OCI-LY7 (cell line): ENCODE measurements at regions of chr16 and their contacts with region 1.

Region 1: GRCh38 chr16:51818342-51818944 is 667.4 kb upstream of the SALL1 start:
- DNase-seq: peak; percentile 1
- H3K4me3 ChIP-seq: no peak overlapping the region
- H3K27ac ChIP-seq: no peak overlapping the region
- H3K4me1 ChIP-seq: no peaks in the 10 kb centered on the region
- CTCF ChIP-seq: peak; percentile 75

Region 2: DNA sequence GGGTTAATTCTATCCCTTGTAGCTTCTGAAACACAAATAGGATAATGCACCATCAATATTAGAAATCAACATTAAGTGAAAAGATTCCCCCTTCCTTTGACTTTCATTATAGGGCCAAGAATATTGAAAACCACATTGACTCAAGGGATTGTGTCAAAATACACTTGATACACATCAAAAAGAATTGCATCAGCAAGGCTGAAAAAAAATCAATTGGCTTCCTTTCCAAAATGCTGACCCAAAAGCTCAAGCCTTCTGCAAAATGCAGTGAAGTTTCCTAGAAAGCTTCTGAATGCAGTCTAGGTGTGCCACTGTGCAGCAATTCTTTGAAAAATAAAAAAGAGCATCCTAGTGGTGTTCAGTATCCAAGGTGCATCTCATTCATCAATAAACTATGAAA is 54.1 kb after region 1 on chr16:
- CTCF ChIA-PET with region 1: no interaction called
- POLR2A ChIA-PET with region 1: no interaction called
- intact Hi-C with region 1: no loop called
- DNase-seq: no peak
- H3K4me3 ChIP-seq: no peak overlapping the region
- H3K27ac ChIP-seq: no peak overlapping the region
- H3K4me1 ChIP-seq: no peaks in the 10 kb centered on the region
- CTCF ChIP-seq: no peak

Region 3: DNA sequence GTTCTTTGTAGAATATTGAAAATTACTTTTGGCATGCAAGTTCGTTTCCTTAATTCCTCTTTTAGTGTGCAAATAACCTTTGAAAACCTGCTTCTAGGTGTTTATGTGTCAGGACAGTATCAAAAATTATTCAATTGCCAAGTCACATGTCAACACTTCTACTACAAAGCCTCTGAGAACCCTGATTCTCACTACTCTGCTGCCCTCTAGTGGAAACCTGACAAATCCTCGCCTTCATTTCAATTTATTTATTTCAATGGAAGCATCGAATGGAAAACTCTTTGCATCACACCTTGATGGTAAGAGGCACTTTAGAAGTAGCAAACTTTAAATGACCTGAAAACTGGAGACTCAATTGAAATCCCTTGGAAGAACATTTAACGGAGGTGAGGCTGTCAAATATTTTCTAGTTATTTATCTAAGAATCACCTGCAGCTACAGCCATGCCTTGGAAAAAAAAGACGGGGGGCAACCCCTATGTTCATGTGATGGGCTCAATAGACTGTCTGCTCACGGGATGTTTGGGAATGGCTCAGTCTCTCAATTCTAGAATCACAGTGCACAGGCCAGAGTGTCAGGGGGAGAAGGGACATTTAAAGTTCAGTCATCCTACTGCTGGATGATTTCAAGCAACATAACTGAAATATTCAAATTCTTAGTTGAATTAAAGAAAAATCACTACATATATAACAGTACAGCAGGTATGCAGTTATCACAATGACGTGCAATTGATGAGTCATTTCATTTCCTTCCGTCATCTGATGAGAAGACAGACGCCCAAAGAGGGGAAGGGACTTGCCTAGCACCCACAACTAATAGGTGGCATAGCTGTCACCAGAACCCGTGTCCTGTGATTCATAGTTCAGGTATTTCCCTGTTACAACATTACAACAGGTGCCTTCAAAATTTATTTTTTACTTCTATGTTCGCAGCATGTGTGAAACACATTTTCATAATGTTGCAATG is 164.6 kb after region 1 on chr16:
- CTCF ChIA-PET with region 1: no interaction called
- POLR2A ChIA-PET with region 1: no interaction called
- intact Hi-C with region 1: loop called (anchors 5 kb)
- DNase-seq: peak; percentile 66
- H3K4me3 ChIP-seq: no peak overlapping the region
- H3K27ac ChIP-seq: no peak overlapping the region
- H3K4me1 ChIP-seq: no peaks in the 10 kb centered on the region
- CTCF ChIP-seq: peak; percentile 93